Activated CD4-positive, alpha-beta memory T cell treated with anti-CD3 and anti-CD28 coated beads, Interleukin-2, amount 10 ng/mL, durations not matched to agents 7 days and 5 days (primary cell): ENCODE measurements at regions of chr18 and their contacts with region 1.

Region 1: DNA sequence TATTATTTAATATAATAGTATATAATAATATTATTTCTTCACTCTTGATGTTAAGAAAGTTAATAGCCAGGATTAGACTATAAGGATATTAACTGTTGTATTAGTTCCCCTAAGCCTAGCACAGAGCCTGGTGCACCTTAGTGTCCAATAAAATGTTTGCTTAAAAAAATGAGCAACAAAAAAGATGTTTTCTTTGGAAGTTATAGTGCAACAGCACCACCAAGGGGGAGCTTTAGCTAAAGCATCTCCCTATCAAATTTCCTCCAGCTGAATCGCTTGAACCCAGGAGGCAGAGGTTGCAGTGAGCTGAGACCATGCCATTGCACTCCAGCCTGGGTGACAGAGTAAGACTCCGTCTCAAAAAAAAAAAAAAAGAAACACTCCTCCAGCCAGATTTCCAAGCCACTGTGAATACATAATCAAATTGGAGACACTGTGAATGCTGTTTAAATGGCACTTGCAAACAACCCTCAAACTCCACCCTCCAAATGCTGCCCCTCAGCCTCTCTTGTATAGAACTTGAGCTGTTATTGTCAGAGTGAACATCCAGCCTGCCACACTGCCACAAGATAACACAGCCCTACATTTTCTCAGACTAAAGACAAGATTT is 221.9 kb downstream of the DYM start:
- DNase-seq: no peak
- H3K4me3 Mint-ChIP-seq: no peak overlapping the region
- H3K27ac Mint-ChIP-seq: no peak overlapping the region
- H3K4me1 Mint-ChIP-seq: no peaks in the 10 kb centered on the region
- H3K27me3 Mint-ChIP-seq: no peaks in the 10 kb centered on the region

Region 2: DNA sequence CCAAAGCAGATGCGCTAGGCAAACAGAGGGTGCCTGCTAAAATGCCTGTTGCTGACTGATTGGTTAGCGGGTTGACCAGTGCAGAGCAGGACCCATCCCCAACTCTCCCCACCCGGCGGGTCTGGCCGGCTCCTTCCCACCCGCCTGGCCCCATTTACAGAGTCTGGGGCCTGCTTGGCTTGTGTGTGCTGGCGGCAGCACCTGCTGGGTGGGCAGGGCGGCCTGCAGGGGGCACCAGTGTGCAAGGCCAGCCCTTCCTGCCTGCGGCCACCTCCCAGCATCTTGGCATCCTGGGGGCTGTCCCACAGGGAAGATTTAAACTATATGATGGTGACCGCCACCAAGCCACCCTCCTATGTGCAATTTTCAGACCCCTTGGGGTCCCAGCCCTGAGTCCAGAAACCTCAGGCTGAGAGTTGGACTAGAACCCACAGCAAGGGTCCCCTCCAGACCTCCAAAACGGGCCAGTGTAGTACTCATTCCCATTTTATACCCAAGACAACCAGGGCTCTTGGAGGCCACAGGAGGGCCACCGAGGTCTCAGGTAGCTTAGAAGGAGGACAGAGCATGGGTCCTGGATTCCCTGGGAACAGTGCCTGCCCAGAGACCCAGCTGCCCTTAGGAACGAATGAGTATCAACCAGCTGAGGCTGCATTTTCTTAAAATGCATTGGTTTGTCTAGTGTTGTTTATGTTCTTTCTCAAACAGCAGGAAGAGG is 461.4 kb before region 1 on chr18:
- CTCF ChIA-PET with region 1: interaction called, 10 read pairs
- POLR2A ChIA-PET with region 1: no interaction called
- DNase-seq: peak; percentile 77
- H3K4me3 Mint-ChIP-seq: no peak overlapping the region
- H3K27ac Mint-ChIP-seq: no peak overlapping the region
- H3K4me1 Mint-ChIP-seq: peaks cover 9% of the 10 kb centered on the region
- H3K27me3 Mint-ChIP-seq: no peaks in the 10 kb centered on the region

Region 3: DNA sequence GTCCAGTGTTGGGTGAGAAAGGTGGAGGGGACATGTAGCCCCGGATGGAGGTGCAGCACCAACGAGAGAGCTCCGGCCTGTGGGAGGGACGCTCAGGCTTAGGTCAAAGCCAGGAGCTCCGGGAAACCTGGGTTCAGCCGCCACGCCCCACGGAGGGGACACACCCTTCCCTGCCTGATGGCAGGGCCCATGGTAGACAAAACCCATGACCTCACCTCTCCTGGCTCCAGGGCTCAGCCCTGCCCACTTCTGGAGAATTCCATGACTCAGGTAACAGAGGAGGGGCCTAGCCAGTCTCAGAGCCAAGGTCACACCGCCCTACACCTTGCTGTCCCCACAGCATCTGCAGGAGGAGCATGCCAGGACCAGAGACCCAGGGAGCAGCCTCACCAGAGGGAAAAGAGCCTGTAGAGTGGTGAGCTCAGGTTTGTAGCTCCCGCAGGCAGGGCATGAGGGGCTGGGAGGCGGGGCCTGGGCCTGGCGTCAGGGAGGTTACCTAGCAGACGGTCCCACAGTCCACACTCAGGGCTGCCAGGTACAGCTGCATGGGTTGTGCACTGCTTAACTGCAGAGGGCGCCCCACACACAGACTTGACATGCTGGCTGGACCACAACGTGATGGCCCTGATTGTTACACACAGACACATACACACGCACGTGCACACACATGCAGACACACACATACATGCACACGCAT is 217.0 kb before region 1 on chr18:
- CTCF ChIA-PET with region 1: interaction called, 35 read pairs
- POLR2A ChIA-PET with region 1: interaction called, 3 read pairs
- DNase-seq: peak; percentile 67
- H3K4me3 Mint-ChIP-seq: no peak overlapping the region
- H3K27ac Mint-ChIP-seq: no peak overlapping the region
- H3K4me1 Mint-ChIP-seq: peaks cover 20% of the 10 kb centered on the region
- H3K27me3 Mint-ChIP-seq: no peaks in the 10 kb centered on the region

Region 4: DNA sequence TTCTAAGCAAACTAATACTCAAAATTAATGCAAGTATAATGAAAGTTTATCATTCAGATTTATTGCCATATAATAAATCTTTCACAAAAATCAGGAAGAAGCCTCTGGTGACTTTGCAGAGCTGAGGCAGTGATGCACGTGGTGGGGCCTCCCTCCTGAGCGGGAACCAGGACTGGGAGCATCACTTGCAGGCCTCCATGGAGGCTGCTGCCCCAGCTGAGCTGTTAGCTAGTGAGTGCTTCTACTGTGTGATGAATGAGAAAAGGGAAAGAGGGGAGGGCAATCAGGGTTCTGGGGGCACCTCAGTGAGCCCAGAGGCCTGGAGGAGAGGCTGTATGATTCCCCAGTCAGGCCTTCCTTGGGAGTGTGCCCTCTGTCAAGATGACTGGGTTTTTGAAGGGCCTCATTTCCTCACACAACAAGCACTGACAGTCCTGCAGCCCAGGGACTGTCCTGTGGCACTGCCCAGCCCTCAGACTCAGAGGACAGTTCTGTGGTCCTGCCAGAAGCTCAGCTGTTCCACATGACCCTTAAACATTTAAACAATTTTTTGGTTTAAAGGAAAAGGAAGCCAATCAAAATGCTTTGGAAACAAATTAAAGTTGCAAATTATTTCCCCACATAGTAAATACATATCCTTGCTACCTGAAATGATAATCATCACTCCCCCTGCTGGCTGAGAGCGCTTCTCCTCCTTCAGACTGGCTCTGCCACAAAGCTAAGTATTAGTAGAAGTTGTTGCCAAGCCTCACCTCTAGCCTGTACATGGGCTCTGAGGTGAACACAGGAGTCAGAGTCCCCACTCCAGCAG is 196.9 kb before region 1 on chr18:
- CTCF ChIA-PET with region 1: interaction called, 12 read pairs
- POLR2A ChIA-PET with region 1: no interaction called
- DNase-seq: peak; percentile 53
- H3K4me3 Mint-ChIP-seq: no peak overlapping the region
- H3K27ac Mint-ChIP-seq: no peak overlapping the region
- H3K4me1 Mint-ChIP-seq: peaks cover 3% of the 10 kb centered on the region
- H3K27me3 Mint-ChIP-seq: no peaks in the 10 kb centered on the region

Region 5: GRCh38 chr18:49151482-49151881 is 87.1 kb before region 1 on chr18:
- CTCF ChIA-PET with region 1: no interaction called
- POLR2A ChIA-PET with region 1: no interaction called
- DNase-seq: no peak
- H3K4me3 Mint-ChIP-seq: no peak overlapping the region
- H3K27ac Mint-ChIP-seq: no peak overlapping the region
- H3K4me1 Mint-ChIP-seq: no peaks in the 10 kb centered on the region
- H3K27me3 Mint-ChIP-seq: no peaks in the 10 kb centered on the region

Region 6: DNA sequence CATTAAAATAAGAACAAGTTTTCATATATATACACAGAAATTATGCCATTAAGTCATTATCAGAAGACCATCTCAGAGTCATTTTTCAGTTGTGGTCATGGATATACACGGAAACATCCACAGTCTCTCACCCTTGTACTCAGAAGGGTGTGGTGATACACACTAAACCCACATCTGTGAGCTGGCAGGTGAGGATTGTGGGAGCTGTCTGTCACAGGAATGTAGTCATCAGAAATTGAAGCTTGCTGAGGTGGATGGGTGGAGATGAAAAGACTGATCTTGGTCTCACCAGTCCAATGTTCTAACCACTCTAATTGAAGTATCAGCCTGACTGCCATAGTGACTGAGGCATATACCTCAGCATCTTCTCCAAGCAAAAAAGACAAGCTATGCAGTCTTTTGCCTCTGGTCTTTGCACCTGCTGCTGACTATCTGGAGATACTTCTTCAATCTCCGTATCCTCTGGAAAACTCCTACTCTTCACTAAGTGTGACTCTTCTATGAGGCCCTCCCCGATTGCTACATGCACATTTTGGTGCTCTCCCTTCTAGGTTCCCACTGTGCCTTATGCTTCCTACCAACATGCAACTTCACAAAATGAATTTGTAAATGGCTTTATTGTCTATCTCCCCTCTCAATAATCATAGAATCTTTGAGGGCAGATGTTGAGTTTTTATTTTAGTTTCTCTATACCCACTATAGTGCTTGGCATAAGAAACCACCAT is 10.9 kb before region 1 on chr18:
- CTCF ChIA-PET with region 1: interaction called, 11 read pairs
- POLR2A ChIA-PET with region 1: interaction called, 9 read pairs
- DNase-seq: peak; percentile 72
- H3K4me3 Mint-ChIP-seq: no peak overlapping the region
- H3K27ac Mint-ChIP-seq: peak overlapping the region; percentile 17
- H3K4me1 Mint-ChIP-seq: peaks cover 46% of the 10 kb centered on the region
- H3K27me3 Mint-ChIP-seq: no peaks in the 10 kb centered on the region

Region 7: DNA sequence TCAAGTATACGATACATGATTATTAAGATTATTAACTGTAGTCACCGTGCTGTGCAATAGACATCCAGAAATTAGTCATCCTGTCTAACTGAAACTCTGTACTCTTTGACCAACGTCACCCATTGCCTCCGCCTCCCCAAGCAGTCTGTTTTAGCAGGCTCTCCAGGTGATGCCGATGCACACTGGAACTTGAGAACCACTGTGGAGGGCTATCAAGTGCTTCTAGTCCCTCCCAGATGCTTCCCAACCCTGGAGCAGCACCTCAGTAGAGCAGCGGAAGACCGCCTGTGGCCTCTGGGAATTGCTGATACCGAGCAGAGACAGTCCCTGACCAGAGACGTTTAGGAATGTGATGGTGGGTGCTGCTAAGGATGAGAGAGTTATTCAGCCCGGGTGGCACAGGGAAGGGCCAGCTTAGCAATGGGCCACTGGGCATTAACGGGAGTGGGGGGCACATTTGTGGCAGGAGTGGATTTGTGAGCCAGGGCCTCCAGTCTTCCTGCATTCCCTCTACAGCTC is 374.0 kb after region 1 on chr18:
- CTCF ChIA-PET with region 1: no interaction called
- POLR2A ChIA-PET with region 1: no interaction called
- DNase-seq: no peak
- H3K4me3 Mint-ChIP-seq: no peak overlapping the region
- H3K27ac Mint-ChIP-seq: no peak overlapping the region
- H3K4me1 Mint-ChIP-seq: no peaks in the 10 kb centered on the region
- H3K27me3 Mint-ChIP-seq: peaks cover 9% of the 10 kb centered on the region